ENCODE measurements at regions of chr2 and their contacts with region 1.

Region 1: GRCh38 chr2:215435809-215436704 is at the start of gene FN1:
- DNase-seq: peak; percentile 95
- H3K4me3 ChIP-seq: peak within 1 kb of the TSS; percentile 89
- H3K27ac ChIP-seq: peak within 1 kb of the TSS; percentile 99
- H3K27me3 ChIP-seq: no peaks in the 10 kb centered on the region
- CTCF ChIP-seq: no peak
- polyA plus RNA-seq, gene FN1: 6,646 and 8,374 TPM in 2 replicates

Region 2: DNA sequence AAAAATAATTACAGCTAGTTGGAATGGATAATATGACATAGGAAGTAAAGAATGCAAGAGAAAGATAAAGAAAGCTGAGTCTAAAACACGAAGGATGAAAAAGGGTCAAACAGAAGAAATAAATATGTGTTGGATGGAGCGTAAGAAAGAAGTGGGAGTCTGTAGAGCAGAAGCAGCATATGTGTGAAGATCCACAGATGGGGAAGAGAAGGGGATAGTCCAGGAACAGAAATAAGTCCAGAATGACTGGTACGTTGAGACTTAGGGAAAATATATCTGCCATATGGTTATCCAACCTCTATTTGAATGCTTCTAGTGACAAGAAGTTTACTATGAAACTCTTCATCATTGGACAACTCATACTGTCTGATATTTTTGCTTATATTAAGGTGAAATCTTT is 315.7 kb before region 1 on chr2:
- CTCF ChIA-PET with region 1: no interaction called
- POLR2A ChIA-PET with region 1: no interaction called
- DNase-seq: no peak
- H3K4me3 ChIP-seq: no peak overlapping the region
- H3K27ac ChIP-seq: no peak overlapping the region
- H3K27me3 ChIP-seq: no peaks in the 10 kb centered on the region
- CTCF ChIP-seq: no peak

Region 3: DNA sequence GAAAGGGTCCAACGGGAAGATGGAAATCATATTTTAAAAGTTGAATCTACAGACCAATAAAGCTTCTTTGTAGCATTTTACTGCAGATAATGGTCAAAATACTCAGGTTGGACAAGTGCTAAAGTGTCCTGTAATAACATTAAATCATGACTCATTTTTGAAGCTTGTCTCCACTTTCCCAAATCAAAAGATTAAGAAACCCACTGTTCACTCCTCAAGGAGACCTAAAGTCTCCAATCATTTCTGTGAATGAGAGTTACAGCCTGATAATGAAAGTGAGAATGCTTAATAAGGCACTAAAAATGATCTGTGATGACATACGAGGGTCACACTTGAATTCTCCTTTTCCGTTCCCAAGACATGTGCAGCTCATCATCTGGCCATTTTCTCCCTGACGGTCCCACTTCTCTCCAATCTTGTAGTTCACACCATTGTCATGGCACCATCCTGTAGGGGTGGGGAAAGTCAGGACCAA is 70.8 kb before region 1 on chr2:
- CTCF ChIA-PET with region 1: no interaction called
- POLR2A ChIA-PET with region 1: no interaction called
- DNase-seq: no peak
- H3K4me3 ChIP-seq: no peak overlapping the region
- H3K27ac ChIP-seq: no peak overlapping the region
- H3K27me3 ChIP-seq: no peaks in the 10 kb centered on the region
- CTCF ChIP-seq: no peak

Region 4: GRCh38 chr2:215454519-215455246 is 18.6 kb after region 1 on chr2:
- CTCF ChIA-PET with region 1: interaction called, 15 read pairs
- POLR2A ChIA-PET with region 1: no interaction called
- DNase-seq: no peak
- H3K4me3 ChIP-seq: no peak overlapping the region
- H3K27ac ChIP-seq: no peak overlapping the region
- H3K27me3 ChIP-seq: no peaks in the 10 kb centered on the region
- CTCF ChIP-seq: peak; percentile 78

Region 5: DNA sequence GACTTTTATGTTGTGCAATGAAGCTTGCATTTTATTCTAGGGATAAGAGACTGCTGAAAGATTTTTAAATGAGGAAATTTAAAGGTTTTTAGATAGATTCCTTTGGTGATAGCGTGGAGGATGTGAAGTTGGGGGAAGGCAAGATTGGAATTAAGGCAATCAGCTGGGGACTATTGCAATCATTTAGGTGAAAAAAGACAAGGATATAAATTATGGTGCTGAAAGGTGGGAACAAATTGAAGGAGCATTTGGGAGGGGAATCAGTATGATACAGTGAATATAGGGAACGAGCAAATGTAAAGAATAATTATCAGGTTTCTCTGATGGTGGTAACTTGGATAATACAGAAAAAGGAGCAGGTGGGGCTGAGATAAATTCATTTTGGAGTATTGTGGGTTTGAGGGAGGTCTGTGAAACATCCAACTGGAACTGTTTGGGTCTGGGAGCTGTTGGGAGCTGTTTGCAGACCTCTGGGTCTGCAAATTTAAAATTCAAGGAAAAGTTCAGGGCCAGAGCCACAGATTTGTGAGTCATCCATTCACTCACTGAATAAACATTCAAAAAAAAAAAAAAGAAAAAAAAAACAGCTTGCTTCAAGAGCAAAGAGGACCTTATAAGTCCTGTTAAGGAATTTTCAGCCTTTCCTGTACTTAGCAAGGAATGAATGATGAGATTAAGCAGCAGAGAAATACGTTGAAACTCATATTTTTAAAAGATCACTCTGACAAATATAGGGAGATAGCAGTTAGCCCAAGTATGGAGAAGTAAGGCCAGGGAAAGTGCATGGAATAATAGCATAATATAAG is 257.3 kb after region 1 on chr2:
- CTCF ChIA-PET with region 1: no interaction called
- POLR2A ChIA-PET with region 1: interaction called, 11 read pairs
- DNase-seq: no peak
- H3K4me3 ChIP-seq: no peak overlapping the region
- H3K27ac ChIP-seq: peak overlapping the region; percentile 83
- H3K27me3 ChIP-seq: no peaks in the 10 kb centered on the region
- CTCF ChIP-seq: no peak

Region 6: GRCh38 chr2:215920244-215921100 is 484.4 kb after region 1 on chr2:
- CTCF ChIA-PET with region 1: interaction called, 11 read pairs
- POLR2A ChIA-PET with region 1: no interaction called
- DNase-seq: peak; percentile 65
- H3K4me3 ChIP-seq: no peak overlapping the region
- H3K27ac ChIP-seq: no peak overlapping the region
- H3K27me3 ChIP-seq: no peaks in the 10 kb centered on the region
- CTCF ChIP-seq: peak; percentile 91